ENCODE measurements at regions of chr5 and their contacts with region 1.

Region 1: DNA sequence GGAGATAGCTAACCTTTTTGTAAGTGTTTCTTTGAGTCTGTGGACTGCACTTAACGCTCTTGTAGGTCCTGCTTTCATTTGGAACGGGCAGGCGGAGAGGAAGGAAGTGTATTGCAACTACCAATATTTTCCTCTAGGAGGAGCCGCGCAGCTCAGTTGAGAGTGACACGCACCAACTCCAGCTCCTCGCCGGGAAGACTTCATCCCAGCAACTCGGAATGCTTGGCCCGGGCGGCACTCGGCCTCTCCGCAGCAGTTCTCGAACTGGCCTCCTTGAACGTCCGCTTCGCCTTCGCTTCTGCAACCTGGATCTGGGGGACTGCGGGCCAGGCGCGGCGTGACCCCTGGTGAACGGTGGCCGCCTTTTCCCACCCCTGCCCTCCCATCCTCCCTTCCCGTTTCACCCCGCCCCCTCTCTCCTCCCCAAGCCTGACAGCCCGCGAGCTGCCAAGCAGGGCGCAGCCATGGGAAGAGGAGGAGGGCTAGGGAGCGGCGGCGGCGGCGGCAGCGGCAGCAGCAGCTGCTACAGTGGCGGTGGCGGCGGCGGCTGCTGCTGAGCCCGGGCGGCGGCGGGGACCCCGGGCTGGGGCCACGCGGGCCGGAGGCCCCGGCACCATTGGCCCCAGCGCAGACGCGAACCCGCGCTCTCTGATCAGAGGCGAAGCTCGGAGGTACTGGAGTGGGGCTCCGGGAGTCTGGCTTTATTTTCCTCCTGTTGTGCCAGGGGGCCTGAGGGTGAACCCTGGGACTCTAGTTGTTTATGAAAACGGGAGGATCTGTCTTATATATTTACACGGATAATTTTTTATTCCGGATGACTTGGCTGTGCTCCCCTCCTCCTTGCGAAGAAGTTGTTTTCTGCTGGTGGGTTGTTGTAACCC is at the start of gene GHR:
- DNase-seq: peak; percentile 78 to 89
- ATAC-seq: peak; percentile 92 to 97 (median 95)
- H3K4me3 ChIP-seq: peak within 1 kb of the TSS; percentile 42 to 77 (median 71)
- H3K27ac ChIP-seq: peak within 1 kb of the TSS; percentile 51 to 95 (median 88)
- H3K4me1 ChIP-seq: peaks cover 0 to 32% (median 11%) of the 10 kb centered on the region in 9 donors
- H3K27me3 ChIP-seq: peaks cover 0 to 12% (median 0%) of the 10 kb centered on the region in 7 donors
- CTCF ChIP-seq: peak; percentile 74 to 94 (median 79)
- total RNA-seq, gene GHR: 8.1 to 15.1 (median 12.3) TPM

Region 2: DNA sequence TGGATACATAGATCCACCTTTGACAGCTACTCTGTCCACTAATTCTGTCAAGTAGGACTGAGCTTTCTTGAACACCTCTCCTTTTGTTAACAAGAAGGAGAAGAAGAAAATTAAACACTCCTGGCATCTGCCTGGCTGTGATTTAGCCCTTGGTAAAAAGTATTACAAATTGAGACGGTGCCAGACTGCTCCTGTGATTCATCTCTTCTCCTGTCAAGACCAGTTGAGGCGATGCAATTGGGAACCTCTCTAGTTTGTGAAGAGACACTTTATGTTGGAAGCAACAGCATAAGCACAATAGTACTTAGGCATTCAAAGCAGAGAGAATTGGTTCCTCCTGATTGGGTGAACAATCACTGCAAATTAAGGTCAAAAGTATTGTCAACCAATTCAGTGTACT is 72.4 kb after region 1 on chr5:
- intact Hi-C with region 1: loop called in 1 of 10 experiments (anchors 10 kb)
- DNase-seq: peak in 1 of 2 donors; percentile 31
- ATAC-seq: peak in 5 of 8 donors; percentile 36 to 63 (median 53)
- H3K4me3 ChIP-seq: no peak overlapping the region
- H3K27ac ChIP-seq: no peak overlapping the region
- H3K4me1 ChIP-seq: peaks cover 0 to 50% (median 38%) of the 10 kb centered on the region in 9 donors
- H3K27me3 ChIP-seq: no peaks in the 10 kb centered on the region
- CTCF ChIP-seq: no peak

Region 3: DNA sequence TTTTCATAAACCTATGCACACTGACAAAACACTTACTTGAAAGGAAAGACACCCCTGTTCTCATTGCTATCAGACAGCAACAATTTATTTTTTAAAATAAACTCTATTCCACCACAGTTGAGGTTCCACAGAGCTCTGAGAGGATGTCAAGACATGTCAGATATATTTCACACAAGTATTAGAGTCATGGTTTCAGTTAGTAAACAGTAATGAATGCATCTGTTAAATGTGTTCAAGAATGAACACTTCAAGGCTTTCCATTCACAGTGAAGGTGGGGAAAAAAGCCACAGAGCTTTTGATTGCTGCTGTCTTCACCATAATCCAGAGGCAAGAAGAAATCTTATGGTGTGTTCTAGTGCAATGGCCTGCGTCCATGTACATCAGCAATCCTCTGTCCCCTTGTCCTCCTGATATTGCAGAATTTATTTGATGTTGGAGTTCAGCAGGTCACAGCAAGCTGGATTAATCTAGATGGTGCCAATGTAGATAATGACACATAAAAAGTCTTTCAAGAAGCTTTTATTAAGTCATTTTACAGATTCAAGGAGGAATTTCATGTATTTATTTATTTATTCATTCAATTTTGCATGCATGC is 146.5 kb after region 1 on chr5:
- intact Hi-C with region 1: loop called in 1 of 10 experiments (anchors 2 kb)
- DNase-seq: no peak
- ATAC-seq: no peak
- H3K4me3 ChIP-seq: no peak overlapping the region
- H3K27ac ChIP-seq: no peak overlapping the region
- H3K4me1 ChIP-seq: peaks cover 0 to 52% (median 26%) of the 10 kb centered on the region in 9 donors
- H3K27me3 ChIP-seq: no peaks in the 10 kb centered on the region
- CTCF ChIP-seq: no peak

Region 4: DNA sequence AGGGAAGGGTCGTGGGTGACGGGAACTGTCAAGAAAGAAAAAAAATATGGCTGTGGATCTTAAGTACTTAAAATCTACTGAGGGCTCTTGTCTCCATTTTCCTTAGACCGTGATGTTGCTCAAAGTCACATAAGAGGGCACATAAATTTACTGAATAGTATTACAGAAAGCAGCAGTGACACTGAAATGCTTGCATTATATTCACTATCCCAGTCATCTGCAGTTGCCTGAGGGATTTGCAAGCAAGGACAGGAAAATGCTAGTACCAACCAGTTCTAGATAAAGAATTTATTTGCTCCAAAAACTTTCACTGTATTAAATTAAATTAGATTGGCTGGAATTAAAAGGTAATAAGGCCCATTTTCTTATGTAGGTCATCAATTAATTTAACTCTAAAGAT is 226.6 kb after region 1 on chr5:
- intact Hi-C with region 1: loop called in 6 of 10 experiments (anchors 5 to 10 kb)
- DNase-seq: no peak
- ATAC-seq: no peak
- H3K4me3 ChIP-seq: no peak overlapping the region
- H3K27ac ChIP-seq: no peak overlapping the region
- H3K4me1 ChIP-seq: peaks cover 0 to 27% (median 9%) of the 10 kb centered on the region in 9 donors
- H3K27me3 ChIP-seq: no peaks in the 10 kb centered on the region
- CTCF ChIP-seq: no peak

Region 5: GRCh38 chr5:42767491-42768105 is 344.1 kb after region 1 on chr5:
- intact Hi-C with region 1: loop called in 5 of 10 experiments (anchors 2 to 10 kb)
- DNase-seq: no peak
- ATAC-seq: peak in 1 of 8 donors; percentile 46
- H3K4me3 ChIP-seq: no peak overlapping the region
- H3K27ac ChIP-seq: no peak overlapping the region
- H3K4me1 ChIP-seq: peaks cover 0 to 6% (median 0%) of the 10 kb centered on the region in 9 donors
- H3K27me3 ChIP-seq: no peaks in the 10 kb centered on the region
- CTCF ChIP-seq: peak in 8 of 9 donors; percentile 26 to 76 (median 60)